Kidney (tissue), 22 donors: ENCODE measurements at regions of chr17 and their contacts with region 1.

Region 1: DNA sequence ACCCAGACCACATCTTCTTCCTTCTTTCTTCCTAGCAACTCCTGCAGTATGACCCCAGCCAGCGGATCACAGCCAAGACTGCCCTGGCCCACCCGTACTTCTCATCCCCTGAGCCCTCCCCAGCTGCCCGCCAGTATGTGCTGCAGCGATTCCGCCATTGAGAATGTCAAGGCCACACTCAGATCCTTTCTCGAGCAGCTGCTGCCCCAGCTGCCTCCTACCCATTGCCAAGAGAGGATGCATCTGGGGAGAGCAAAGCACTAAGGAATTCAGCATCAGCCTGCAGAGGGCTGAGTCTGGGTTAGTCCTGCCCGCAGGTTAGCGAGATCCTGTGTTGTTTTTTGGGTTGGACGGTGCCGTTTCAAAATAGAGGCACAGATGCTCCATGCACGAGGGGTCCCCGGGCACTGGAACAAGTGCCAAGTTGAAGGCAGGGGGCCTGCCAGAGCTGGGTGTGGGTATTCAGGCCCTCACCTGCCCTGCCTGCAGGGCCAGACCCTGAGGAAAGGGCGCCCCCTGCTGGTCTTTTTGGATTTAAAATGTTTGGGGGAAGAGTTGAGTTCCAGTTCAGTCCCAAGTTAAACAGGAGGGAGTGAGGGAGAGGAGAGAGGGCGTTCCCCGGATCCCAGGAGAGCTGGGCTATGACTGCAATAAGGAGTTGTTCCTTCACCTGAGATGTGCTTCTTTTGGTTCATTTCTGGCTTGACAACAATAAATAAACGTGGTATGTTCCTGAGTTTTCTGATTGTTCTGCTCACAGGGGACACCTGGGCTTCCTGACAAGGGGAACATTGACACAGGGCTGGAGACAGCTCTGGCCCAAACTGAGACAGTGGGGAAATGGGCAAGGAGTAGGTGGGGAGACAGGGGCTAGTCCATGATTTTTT is 4.9 kb downstream of the CDK3 start:
- DNase-seq: peak; percentile 59 to 80 (median 78)
- H3K4me3 ChIP-seq: no peak overlapping the region
- H3K27ac ChIP-seq: no peak overlapping the region
- H3K4me1 ChIP-seq: peaks cover 0 to 5% (median 0%) of the 10 kb centered on the region in 3 donors
- H3K27me3 ChIP-seq: no peaks in the 10 kb centered on the region
- CTCF ChIP-seq: peak; percentile 55

Region 2: GRCh38 chr17:75909812-75910274 is 95.7 kb before region 1 on chr17:
- intact Hi-C with region 1: loop called (anchors 10 kb)
- DNase-seq: peak in 3 of 5 donors; percentile 12 to 76 (median 62)
- H3K4me3 ChIP-seq: no peak overlapping the region
- H3K27ac ChIP-seq: no peak overlapping the region
- H3K4me1 ChIP-seq: no peaks in the 10 kb centered on the region
- H3K27me3 ChIP-seq: no peaks in the 10 kb centered on the region
- CTCF ChIP-seq: no peak